MCF 10A (cell line): ENCODE measurements at regions of chr17 and their contacts with region 1.

Region 1: GRCh38 chr17:3738562-3739295 is 15.0 kb downstream of the HASPIN start:
- DNase-seq: peak; percentile 58
- H3K4me3 Mint-ChIP-seq: peak overlapping the region; percentile 47
- H3K27ac Mint-ChIP-seq: peak overlapping the region; percentile 61
- H3K4me1 Mint-ChIP-seq: peaks cover 21% of the 10 kb centered on the region
- H3K27me3 Mint-ChIP-seq: no peaks in the 10 kb centered on the region
- CTCF ChIP-seq: no peak

Region 2: GRCh38 chr17:3723556-3724369 is 15.0 kb before region 1 on chr17 and contains the start of gene HASPIN:
- CTCF ChIA-PET with region 1: interaction called, 40 read pairs
- POLR2A ChIA-PET with region 1: interaction called, 7 read pairs
- intact Hi-C with region 1: no loop called
- DNase-seq: peak; percentile 92
- H3K4me3 Mint-ChIP-seq: peak within 1 kb of the TSS; percentile 75
- H3K27ac Mint-ChIP-seq: peak within 1 kb of the TSS; percentile 20
- H3K4me1 Mint-ChIP-seq: peaks cover 33% of the 10 kb centered on the region
- H3K27me3 Mint-ChIP-seq: no peaks in the 10 kb centered on the region
- CTCF ChIP-seq: no peak
- total RNA-seq, gene HASPIN: 3.7 and 6.4 TPM in 2 replicates

Region 3: DNA sequence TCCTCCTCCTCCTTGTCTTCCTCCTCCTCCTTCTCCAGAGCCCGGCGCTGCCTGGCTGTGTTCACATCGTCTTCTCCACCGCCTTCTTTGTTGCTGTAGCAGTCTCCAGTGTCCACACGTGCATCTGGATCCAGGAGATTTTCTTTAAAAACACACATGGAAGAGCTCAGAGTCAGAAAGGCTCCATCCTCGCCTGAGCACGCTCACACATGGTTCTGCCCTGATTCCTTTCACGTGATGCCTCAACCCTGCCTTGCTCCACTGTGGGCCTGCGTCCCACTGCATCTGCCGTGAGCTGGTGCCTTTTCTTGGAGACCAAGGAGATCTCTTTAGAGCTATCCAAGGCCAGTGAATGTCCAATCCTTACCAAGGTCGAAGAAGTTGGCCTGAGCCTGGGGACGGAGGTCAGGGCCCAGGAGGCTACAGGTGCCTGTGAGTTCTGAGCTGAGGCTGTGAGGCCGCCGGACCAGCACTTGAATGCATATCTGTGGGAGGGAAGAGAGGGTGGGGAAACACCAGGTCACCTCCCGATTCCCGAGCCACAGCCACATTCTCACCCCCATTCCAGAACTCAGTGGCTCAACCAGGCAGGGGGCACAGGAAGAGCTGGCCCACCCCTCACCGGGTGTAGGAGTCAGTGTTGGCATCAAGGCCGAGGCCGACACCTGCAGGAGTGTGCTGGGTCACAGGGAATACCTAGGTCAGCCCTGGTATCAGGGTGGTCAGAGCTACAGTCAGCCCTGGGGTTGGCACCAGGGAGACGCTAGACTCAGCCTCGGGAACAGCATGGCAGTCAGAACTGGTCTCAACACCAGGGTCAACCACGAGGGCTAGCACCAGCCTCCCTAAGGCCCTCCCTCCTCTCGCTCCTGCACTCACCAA is 22.5 kb after region 1 on chr17:
- CTCF ChIA-PET with region 1: interaction called, 15 read pairs
- POLR2A ChIA-PET with region 1: interaction called, 3 read pairs
- intact Hi-C with region 1: no loop called
- DNase-seq: no peak
- H3K4me3 Mint-ChIP-seq: no peak overlapping the region
- H3K27ac Mint-ChIP-seq: no peak overlapping the region
- H3K4me1 Mint-ChIP-seq: no peaks in the 10 kb centered on the region
- H3K27me3 Mint-ChIP-seq: peaks cover 11% of the 10 kb centered on the region
- CTCF ChIP-seq: no peak

Region 4: GRCh38 chr17:3818786-3819185 is 80.1 kb after region 1 on chr17:
- CTCF ChIA-PET with region 1: interaction called, 35 read pairs
- POLR2A ChIA-PET with region 1: no interaction called
- intact Hi-C with region 1: no loop called
- DNase-seq: no peak
- H3K4me3 Mint-ChIP-seq: no peak overlapping the region
- H3K27ac Mint-ChIP-seq: no peak overlapping the region
- H3K4me1 Mint-ChIP-seq: no peaks in the 10 kb centered on the region
- H3K27me3 Mint-ChIP-seq: no peaks in the 10 kb centered on the region
- CTCF ChIP-seq: no peak

Region 5: GRCh38 chr17:3835410-3836229 is 96.9 kb after region 1 on chr17:
- CTCF ChIA-PET with region 1: interaction called, 12 read pairs
- POLR2A ChIA-PET with region 1: no interaction called
- intact Hi-C with region 1: no loop called
- DNase-seq: peak; percentile 14
- H3K4me3 Mint-ChIP-seq: no peak overlapping the region
- H3K27ac Mint-ChIP-seq: no peak overlapping the region
- H3K4me1 Mint-ChIP-seq: no peaks in the 10 kb centered on the region
- H3K27me3 Mint-ChIP-seq: no peaks in the 10 kb centered on the region
- CTCF ChIP-seq: no peak

Region 6: GRCh38 chr17:3893003-3893719 is 154.4 kb after region 1 on chr17 and contains the start of gene CAMKK1:
- CTCF ChIA-PET with region 1: interaction called, 12 read pairs
- POLR2A ChIA-PET with region 1: interaction called, 4 read pairs
- intact Hi-C with region 1: no loop called
- DNase-seq: peak; percentile 83
- H3K4me3 Mint-ChIP-seq: peak within 1 kb of the TSS; percentile 72
- H3K27ac Mint-ChIP-seq: no peak within 1 kb of the TSS
- H3K4me1 Mint-ChIP-seq: peaks cover 38% of the 10 kb centered on the region
- H3K27me3 Mint-ChIP-seq: no peaks in the 10 kb centered on the region
- CTCF ChIP-seq: no peak
- total RNA-seq, gene CAMKK1: 3.8 and 4.3 TPM in 2 replicates